ENCODE measurements at regions of chr15 and their contacts with region 1.

Region 1: GRCh38 chr15:64153480-64154367 is 2.2 kb downstream of the SNX22 start:
- DNase-seq: peak; percentile 92
- CTCF ChIP-seq: peak; percentile 99

Region 2: GRCh38 chr15:63539521-63539920 is 614.2 kb before region 1 on chr15:
- CTCF ChIA-PET with region 1: no interaction called
- POLR2A ChIA-PET with region 1: no interaction called
- DNase-seq: no peak
- CTCF ChIP-seq: no peak

Region 3: DNA sequence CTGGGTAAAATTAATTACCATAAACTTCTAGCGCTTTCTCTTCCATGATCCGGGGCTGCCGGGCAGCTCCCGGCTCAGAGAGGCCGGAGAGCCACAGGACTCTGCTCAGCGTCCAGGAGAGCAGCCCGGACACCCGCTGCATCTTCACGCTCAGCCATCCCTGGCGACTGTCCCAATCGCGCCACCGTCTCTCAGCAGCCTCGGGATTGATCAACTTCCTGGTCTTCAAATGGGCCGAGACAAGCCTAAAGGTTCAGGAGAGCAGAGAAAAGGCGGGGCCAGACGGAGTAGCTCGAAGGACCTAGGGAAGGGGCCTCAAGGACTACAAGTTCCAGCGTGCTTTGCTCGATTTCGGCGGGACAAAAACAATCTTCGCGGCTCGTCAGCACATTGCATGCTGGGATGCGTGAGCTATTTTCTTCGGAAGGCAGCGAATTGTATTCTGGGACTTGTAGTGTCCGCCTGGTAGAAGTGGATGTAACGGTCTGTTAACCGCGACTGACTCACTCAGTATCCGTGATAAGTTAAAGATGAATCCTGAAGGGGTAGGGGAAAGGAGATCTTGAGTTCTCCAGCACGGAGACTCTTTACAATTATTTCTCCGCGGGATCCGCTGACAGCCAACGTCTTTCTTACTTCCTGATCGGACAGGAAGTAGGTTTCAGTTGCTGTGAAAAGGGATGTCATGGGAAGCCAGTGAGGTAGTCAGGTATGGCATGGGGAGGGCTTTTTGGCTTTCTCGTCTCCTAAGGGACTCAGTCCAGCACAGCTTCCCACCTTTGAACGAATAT is 59.9 kb before region 1 on chr15 and contains the start of gene CIAO2A:
- CTCF ChIA-PET with region 1: interaction called, 33 read pairs
- POLR2A ChIA-PET with region 1: interaction called, 3 read pairs
- DNase-seq: peak; percentile 88
- CTCF ChIP-seq: no peak

Region 4: DNA sequence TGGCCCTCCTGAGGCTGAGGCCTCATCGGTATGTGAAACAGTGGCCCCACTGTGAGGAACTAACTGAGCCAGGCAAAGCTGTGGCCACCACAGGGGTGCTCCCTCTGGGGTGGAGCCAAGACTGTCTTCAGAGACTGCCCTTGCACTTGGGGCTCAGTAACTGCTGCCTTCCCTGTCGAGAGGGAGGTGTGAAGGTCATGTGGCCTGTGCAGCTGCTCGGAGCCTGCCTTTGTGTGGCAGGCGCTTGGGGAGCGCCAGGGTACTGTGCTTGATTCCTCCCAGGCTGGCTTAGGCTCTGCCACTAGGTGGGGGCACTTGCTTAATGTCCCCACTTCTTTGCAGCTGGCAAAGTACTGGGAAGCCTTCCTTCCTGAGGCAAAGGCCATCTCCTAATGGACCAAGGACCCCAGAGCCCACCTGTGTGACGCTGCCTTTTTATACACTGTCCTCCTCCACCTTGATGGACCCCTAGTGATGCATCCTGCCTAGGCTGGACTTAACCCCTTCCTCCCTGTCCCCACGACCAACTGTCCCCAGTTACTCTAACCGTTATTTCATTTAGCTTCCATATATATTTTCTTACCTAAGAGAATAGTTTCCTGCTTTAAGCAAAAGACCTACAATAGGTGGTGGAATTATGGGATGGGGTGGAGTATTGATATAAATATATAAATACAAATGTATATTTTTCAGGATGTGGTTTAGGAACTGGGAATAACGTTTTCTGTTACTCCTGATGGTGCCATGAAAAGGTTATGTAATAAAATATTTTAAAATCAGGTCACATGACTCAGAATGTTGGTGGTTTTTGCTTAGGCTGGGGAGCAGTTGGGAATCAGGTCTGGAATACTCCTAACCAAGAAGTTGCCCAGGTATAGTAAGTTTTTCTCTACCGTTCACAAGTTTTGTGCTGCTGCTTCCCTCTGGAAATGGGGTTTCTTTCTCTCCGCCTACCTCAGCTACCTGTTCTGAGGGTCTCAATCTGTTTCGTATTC is 16.2 kb before region 1 on chr15:
- CTCF ChIA-PET with region 1: interaction called, 20 read pairs
- POLR2A ChIA-PET with region 1: interaction called, 4 read pairs
- DNase-seq: no peak
- CTCF ChIP-seq: peak; percentile 15

Region 5: GRCh38 chr15:64209680-64210334 is 56.1 kb after region 1 on chr15:
- CTCF ChIA-PET with region 1: no interaction called
- POLR2A ChIA-PET with region 1: no interaction called
- DNase-seq: peak; percentile 38
- CTCF ChIP-seq: peak; percentile 41